HEK293 (cell line): ENCODE measurements at regions of chr19 and their contacts with region 1.

Region 1: GRCh38 chr19:47790398-47790814 is 11.9 kb downstream of the SELENOW start:
- H3K4me3 ChIP-seq: no peak overlapping the region
- H3K27ac ChIP-seq: no peak overlapping the region
- H3K4me1 ChIP-seq: no peaks in the 10 kb centered on the region
- CTCF ChIP-seq: peak; percentile 85

Region 2: GRCh38 chr19:47713046-47714021 is 77.1 kb before region 1 on chr19 and contains the start of gene EHD2:
- CTCF ChIA-PET with region 1: interaction called, 11 read pairs
- POLR2A ChIA-PET with region 1: no interaction called
- H3K4me3 ChIP-seq: peak within 1 kb of the TSS; percentile 13
- H3K27ac ChIP-seq: no peak within 1 kb of the TSS
- H3K4me1 ChIP-seq: no peaks in the 10 kb centered on the region
- CTCF ChIP-seq: no peak

Region 3: GRCh38 chr19:47765523-47766358 is 24.7 kb before region 1 on chr19:
- CTCF ChIA-PET with region 1: interaction called, 197 read pairs
- POLR2A ChIA-PET with region 1: interaction called, 9 read pairs
- H3K4me3 ChIP-seq: no peak overlapping the region
- H3K27ac ChIP-seq: no peak overlapping the region
- H3K4me1 ChIP-seq: no peaks in the 10 kb centered on the region
- CTCF ChIP-seq: peak; percentile 76

Region 4: DNA sequence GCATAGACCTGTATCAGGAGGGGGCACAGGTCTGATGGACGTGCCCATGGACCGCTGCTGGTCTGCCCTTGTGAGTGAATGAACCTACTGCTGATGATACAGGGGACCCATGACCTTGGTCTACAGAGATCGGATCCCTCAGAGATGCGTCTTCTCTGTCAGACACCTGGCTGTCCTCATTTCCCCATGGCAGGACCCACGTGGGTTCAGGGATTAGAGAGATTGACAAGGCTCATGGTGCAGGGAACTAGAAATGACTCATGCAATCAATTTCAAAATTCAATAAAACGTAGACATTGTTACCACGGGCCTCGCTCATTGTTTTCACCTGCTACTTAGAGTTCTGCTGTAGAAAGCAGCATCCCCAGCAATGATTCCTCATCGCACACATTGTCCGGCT is 14.9 kb after region 1 on chr19:
- CTCF ChIA-PET with region 1: interaction called, 14 read pairs
- POLR2A ChIA-PET with region 1: no interaction called
- H3K4me3 ChIP-seq: no peak overlapping the region
- H3K27ac ChIP-seq: no peak overlapping the region
- H3K4me1 ChIP-seq: no peaks in the 10 kb centered on the region
- CTCF ChIP-seq: no peak

Region 5: GRCh38 chr19:47813304-47814004 is 23.0 kb after region 1 on chr19:
- CTCF ChIA-PET with region 1: interaction called, 11 read pairs
- POLR2A ChIA-PET with region 1: interaction called, 3 read pairs
- H3K4me3 ChIP-seq: no peak overlapping the region
- H3K27ac ChIP-seq: no peak overlapping the region
- H3K4me1 ChIP-seq: no peaks in the 10 kb centered on the region; the same call in 1 of the 2 replicates
- CTCF ChIP-seq: peak; percentile 28; the same call in 1 of the 2 replicates